Endothelial cell of umbilical vein (primary cell): ENCODE measurements at regions of chr2 and their contacts with region 1.

Region 1: DNA sequence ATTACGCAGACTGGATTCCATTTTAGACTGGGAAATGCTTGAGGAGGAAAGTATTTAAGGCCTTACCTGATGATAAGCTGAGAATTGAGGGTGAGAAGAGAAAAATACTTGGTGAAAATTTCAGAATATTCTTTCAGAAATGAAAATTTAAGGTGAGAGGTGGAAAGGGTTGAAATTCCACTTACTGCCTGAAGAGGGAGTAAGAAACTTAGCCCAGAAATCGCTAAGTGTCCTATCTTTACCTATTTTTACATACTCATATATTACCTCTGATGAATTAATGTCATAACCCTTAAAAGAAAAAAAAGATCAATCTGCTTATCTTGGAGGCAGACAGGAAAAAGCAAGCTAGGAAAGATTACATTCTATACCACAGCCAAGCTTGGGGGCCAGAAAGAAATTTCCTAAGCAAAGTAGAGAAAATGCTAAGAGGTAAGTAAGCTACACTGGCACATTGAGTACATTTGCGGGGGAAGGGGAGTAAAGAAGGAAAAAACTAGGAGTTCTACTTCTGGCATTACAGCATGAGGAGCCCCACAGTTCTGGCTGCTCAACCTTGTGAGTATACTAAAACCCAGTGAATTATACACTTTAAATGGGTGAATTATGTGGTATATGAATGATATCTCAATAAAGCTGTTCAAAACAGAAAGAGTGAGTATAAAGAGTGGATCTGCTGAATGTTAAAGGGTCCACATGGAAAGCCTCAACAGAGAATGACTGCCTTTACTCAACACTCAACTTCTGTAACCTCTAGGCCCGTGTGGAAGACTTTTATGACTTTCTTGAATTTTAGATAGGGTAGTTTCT is 33.8 kb downstream of the SMC6 start:
- DNase-seq: peak; percentile 79
- H3K4me3 ChIP-seq: no peak overlapping the region
- H3K27ac ChIP-seq: no peak overlapping the region
- H3K4me1 ChIP-seq: no peaks in the 10 kb centered on the region
- H3K27me3 ChIP-seq: no peaks in the 10 kb centered on the region
- CTCF ChIP-seq: peak; percentile 46 to 49
- POLR2A ChIP-seq: no peak

Region 2: DNA sequence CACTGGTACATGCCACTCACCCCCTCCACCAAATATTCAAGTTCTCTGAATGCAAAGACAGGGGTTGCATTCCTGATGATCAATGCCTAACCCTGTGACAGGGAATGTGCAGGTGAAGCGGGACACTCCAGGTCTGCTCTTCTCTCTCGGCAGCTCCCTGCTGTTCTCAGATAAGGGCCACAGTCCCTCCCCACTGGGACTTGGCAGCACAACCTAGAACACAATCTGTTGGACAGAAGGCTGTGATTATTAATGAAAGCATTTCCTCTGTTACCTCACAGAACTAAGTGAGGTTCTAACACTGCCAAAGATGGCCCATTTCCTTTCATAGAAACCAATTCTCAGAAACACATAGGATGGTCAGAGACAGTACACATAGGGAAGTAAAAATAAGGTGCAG is 136.6 kb before region 1 on chr2:
- CTCF ChIA-PET with region 1: no interaction called
- POLR2A ChIA-PET with region 1: no interaction called
- dilution Hi-C with region 1: no loop called
- intact Hi-C with region 1: no loop called
- DNase-seq: no peak
- H3K4me3 ChIP-seq: no peak overlapping the region
- H3K27ac ChIP-seq: no peak overlapping the region
- H3K4me1 ChIP-seq: no peaks in the 10 kb centered on the region
- H3K27me3 ChIP-seq: no peaks in the 10 kb centered on the region
- CTCF ChIP-seq: no peak
- POLR2A ChIP-seq: no peak

Region 3: GRCh38 chr2:17736989-17737388 is 17.2 kb after region 1 on chr2:
- CTCF ChIA-PET with region 1: interaction called, 11 read pairs
- POLR2A ChIA-PET with region 1: no interaction called
- dilution Hi-C with region 1: no loop called
- intact Hi-C with region 1: no loop called
- DNase-seq: peak; percentile 85
- H3K4me3 ChIP-seq: no peak overlapping the region
- H3K27ac ChIP-seq: peak overlapping the region; percentile 94
- H3K4me1 ChIP-seq: peaks cover 20% of the 10 kb centered on the region
- H3K27me3 ChIP-seq: no peaks in the 10 kb centered on the region
- CTCF ChIP-seq: no peak
- POLR2A ChIP-seq: no peak

Region 4: DNA sequence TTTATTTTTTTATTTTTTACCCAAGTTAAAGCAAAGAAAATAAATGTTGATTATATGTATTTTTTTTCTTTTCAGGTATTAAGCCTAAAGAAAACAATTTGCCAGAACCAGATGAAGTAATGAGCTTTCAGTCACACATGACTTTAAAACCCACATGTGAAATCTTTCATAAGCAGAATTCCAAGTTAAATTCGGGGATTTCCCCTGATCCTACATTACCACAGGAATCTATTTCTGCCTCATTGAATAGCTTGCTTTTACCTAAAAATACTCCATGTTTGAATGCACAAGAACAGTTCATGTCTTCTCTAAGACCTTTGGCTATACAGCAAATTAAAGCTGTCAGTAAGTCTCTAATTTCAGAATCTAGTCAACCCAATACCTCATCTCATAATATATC is 60.8 kb after region 1 on chr2:
- CTCF ChIA-PET with region 1: interaction called, 10 read pairs
- POLR2A ChIA-PET with region 1: no interaction called
- dilution Hi-C with region 1: no loop called
- intact Hi-C with region 1: no loop called
- DNase-seq: no peak
- H3K4me3 ChIP-seq: no peak overlapping the region
- H3K27ac ChIP-seq: no peak overlapping the region
- H3K4me1 ChIP-seq: no peaks in the 10 kb centered on the region
- H3K27me3 ChIP-seq: no peaks in the 10 kb centered on the region
- CTCF ChIP-seq: no peak
- POLR2A ChIP-seq: no peak

Region 5: DNA sequence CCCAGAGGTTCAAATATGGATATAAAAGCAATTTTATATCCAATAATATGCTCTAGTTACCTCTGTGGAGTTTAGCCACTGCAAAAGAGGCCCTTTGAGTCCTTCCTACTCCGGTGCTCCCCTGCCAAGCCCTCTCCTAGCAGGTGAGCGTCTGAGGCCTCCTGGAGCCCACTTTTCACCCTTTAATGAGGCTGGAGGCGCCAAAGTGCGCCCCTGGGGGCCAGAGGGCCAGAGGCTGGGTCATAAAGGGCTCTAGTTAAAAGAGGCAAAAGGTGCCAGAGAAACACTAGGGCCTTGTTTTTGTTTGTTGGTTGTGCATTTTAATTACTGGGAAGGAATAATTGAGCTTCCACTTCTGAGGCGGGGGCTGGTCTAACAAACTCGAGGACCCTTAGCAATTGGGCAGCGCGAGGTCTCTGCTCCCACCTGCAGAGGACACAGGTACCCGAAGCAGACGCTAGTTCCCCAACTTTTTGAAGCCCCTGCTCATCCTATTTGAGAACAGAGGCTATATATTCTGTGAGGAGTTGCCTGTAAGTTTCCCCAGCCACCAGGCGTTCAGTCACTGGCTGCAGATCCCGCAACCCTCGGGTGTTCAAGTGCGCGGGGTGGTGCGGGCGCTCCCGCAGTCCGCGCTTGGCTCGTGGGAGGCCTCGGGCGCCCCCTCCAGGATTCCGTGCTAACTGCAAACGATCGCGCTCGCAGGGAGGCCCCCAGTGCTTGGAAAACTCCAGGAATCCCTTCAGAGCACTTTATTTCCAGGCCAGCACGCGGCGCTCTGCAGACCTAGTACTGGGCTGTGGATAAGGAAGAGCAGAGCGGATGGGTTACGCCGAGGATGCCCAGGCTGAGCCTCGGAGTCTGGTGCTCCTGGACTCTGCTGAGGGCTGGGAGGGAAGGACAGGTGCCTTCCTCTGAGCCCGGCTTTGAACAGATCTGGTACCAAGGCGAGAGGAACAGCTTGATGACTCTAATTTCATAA is 110.6 kb after region 1 on chr2:
- CTCF ChIA-PET with region 1: interaction called, 24 read pairs
- POLR2A ChIA-PET with region 1: no interaction called
- dilution Hi-C with region 1: no loop called
- intact Hi-C with region 1: loop called (anchors 1 kb)
- DNase-seq: peak; percentile 89
- H3K4me3 ChIP-seq: no peak overlapping the region
- H3K27ac ChIP-seq: no peak overlapping the region
- H3K4me1 ChIP-seq: no peaks in the 10 kb centered on the region
- H3K27me3 ChIP-seq: peaks cover 8 to 30% of the 10 kb centered on the region in 2 experiments
- CTCF ChIP-seq: peak; percentile 95 to 98
- POLR2A ChIP-seq: no peak

Region 6: DNA sequence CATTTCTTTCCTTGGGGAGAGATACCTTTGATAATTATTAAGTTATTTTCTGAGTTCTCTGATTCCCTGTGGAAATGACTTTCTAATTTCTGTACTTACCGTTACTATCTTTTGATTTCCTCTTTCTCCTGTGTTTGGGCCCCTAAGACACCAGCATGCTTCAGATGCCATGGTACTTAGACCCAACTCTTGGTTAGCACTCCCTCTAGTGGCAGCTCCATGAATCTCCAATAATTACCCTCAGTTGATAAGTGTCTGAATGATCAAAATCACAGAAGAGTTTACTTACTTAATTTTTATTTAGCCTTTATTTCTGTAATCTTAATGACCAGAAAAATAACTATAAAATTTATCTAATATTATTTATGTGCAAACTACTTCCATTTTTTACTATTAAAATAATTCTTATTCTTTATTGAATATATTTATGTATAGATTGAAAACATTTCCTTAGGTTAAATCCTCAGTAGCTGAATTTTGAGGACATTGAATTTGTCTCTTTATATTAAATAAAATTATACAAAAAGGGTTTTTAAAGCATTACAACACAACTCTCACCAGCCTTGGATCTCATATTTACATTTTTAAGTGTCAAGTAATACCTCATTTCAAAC is 459.1 kb after region 1 on chr2:
- CTCF ChIA-PET with region 1: interaction called, 8 read pairs
- POLR2A ChIA-PET with region 1: no interaction called
- dilution Hi-C with region 1: no loop called
- intact Hi-C with region 1: loop called (anchors 5 kb)
- DNase-seq: peak; percentile 65
- H3K4me3 ChIP-seq: no peak overlapping the region
- H3K27ac ChIP-seq: no peak overlapping the region
- H3K4me1 ChIP-seq: no peaks in the 10 kb centered on the region
- H3K27me3 ChIP-seq: peaks cover 0 to 2% of the 10 kb centered on the region in 2 experiments
- CTCF ChIP-seq: peak; percentile 62 to 67
- POLR2A ChIP-seq: no peak